Breast epithelium (tissue), 4 donors: ENCODE measurements at regions of chr14 and their contacts with region 1.

Region 1: GRCh38 chr14:73616831-73617230 is 4.5 kb downstream of the ACOT6 start:
- DNase-seq: no peak
- H3K4me3 ChIP-seq: no peak overlapping the region
- H3K27ac ChIP-seq: no peak overlapping the region
- H3K4me1 ChIP-seq: no peaks in the 10 kb centered on the region
- H3K27me3 ChIP-seq: no peaks in the 10 kb centered on the region
- CTCF ChIP-seq: no peak
- POLR2A ChIP-seq: no peak

Region 2: GRCh38 chr14:73176685-73177084 is 440.1 kb before region 1 on chr14:
- intact Hi-C with region 1: loop called (anchors 5 kb)
- DNase-seq: no peak
- H3K4me3 ChIP-seq: no peak overlapping the region
- H3K27ac ChIP-seq: no peak overlapping the region
- H3K4me1 ChIP-seq: peaks cover 0 to 4% of the 10 kb centered on the region in 2 donors
- H3K27me3 ChIP-seq: no peaks in the 10 kb centered on the region
- CTCF ChIP-seq: no peak
- POLR2A ChIP-seq: no peak

Region 3: GRCh38 chr14:73424453-73424852 is 192.4 kb before region 1 on chr14:
- intact Hi-C with region 1: no loop called
- DNase-seq: no peak
- H3K4me3 ChIP-seq: no peak overlapping the region
- H3K27ac ChIP-seq: peak overlapping the region in 1 of 2 donors; percentile 7
- H3K4me1 ChIP-seq: no peaks in the 10 kb centered on the region
- H3K27me3 ChIP-seq: no peaks in the 10 kb centered on the region
- CTCF ChIP-seq: no peak
- POLR2A ChIP-seq: no peak

Region 4: DNA sequence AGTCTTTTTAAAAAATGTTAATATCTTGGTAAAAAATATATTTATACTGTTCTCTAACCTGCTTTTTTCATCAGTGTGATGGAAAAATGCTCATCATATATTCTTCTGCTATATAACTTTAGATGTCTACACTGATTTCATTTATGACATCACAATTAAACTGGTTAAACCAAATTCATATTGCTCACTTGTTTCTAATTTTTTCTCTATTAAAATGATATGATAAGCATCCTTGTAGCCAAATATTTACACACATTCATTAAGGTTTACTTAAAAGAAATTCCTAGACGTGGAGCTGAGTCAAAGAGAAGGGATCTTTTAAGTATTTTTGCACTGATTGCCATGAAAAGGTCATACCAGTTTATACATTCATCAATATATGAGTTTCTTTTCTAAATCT is 51.9 kb before region 1 on chr14:
- intact Hi-C with region 1: no loop called
- DNase-seq: no peak
- H3K4me3 ChIP-seq: no peak overlapping the region
- H3K27ac ChIP-seq: no peak overlapping the region
- H3K4me1 ChIP-seq: peaks cover 7% of the 10 kb centered on the region in 2 donors
- H3K27me3 ChIP-seq: no peaks in the 10 kb centered on the region
- CTCF ChIP-seq: no peak
- POLR2A ChIP-seq: no peak